Activated naive CD4-positive, alpha-beta T cell treated with anti-CD3 and anti-CD28 coated beads for 36 hours (primary cell): ENCODE measurements at regions of chr7 and their contacts with region 1.

Region 1: DNA sequence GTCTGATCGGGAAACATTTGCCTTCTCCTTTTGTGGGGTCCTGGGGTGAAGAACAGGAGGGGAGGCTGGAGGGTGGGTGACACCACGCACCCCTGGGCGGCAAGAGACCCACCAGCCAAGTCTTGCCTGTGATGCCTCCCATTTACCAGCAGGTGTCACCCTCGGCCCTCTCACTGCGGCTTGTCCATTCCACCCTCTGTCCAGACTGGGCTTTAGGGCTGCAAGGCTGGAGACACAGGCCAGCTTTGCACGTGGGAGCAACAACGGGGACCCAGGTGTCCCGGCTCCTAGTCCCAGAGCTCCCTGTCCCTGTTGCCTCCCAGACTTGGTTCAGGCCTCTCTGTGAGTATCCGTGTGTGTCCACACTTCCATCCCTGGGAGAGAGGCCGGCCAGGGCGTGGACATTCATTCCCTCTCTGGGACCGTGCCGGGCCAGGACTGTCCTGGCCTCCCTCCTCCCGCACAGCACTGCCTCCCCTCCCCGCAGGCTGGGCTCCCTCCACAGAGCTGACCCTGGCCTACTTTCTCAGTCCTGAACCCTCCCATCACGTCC is 36.2 kb upstream of the GTF2IRD1 start:
- DNase-seq: peak; percentile 60
- H3K4me3 Mint-ChIP-seq: no peak overlapping the region
- H3K27ac Mint-ChIP-seq: no peak overlapping the region
- H3K4me1 Mint-ChIP-seq: no peaks in the 10 kb centered on the region
- H3K27me3 Mint-ChIP-seq: no peaks in the 10 kb centered on the region

Region 2: DNA sequence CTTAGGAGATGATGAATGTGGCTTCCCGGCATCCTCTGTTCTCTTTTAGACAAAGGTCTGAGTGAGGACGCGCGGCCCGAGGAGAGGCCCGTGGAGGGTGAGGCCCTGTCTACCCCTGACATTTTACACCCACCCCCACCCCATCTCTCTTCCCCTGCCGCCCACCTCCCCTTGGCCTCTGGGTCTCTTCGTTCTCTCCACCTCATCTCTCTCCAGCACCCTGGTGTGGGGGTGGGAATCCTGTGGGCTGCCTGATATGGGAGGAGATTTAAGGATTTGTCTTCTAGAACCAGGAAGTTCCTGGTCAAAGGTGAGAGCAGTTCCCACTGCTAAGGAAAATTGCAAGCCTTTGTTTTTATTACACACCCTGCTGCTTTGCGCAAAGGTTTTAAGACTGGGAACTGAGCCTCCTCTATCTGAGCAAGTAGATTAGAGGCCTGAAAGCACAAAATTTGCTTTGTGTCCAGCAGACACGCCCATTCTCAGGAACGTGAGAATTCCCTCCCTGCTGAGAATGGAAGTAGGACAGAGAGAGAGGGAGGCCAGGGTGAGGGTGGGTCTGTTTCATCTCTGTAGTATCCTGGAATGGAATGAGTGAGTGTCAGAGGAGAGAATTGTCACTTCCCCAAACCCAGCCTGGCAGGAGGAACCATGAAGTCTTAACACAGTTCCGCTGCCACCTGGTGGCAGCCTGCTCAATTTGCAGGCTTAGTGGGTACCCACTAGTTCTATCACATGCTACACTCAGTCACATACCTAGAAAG is 127.4 kb after region 1 on chr7:
- CTCF ChIA-PET with region 1: interaction called, 4 read pairs
- intact Hi-C with region 1: loop called (anchors 1 kb)
- DNase-seq: peak; percentile 54
- H3K4me3 Mint-ChIP-seq: no peak overlapping the region
- H3K27ac Mint-ChIP-seq: no peak overlapping the region
- H3K4me1 Mint-ChIP-seq: no peaks in the 10 kb centered on the region
- H3K27me3 Mint-ChIP-seq: no peaks in the 10 kb centered on the region

Region 3: GRCh38 chr7:74569501-74570075 is 152.1 kb after region 1 on chr7:
- CTCF ChIA-PET with region 1: interaction called, 27 read pairs
- intact Hi-C with region 1: loop called (anchors 5 kb)
- DNase-seq: no peak
- H3K4me3 Mint-ChIP-seq: no peak overlapping the region
- H3K27ac Mint-ChIP-seq: no peak overlapping the region
- H3K4me1 Mint-ChIP-seq: peaks cover 5% of the 10 kb centered on the region
- H3K27me3 Mint-ChIP-seq: no peaks in the 10 kb centered on the region